ENCODE measurements at regions of chr1 and their contacts with region 1.

Region 1: GRCh38 chr1:181189691-181190363 is 101.3 kb downstream of the IER5 start:
- DNase-seq: peak; percentile 58 to 98
- H3K4me3 ChIP-seq: peak overlapping the region in 3 of 4 experiments; percentile 16 to 63 (median 26); a peak in 4 of 8 replicates
- H3K27ac ChIP-seq: no peak overlapping the region
- H3K4me1 ChIP-seq: peaks cover 0 to 2% (median 0%) of the 10 kb centered on the region in 4 experiments; a peak in 1 of 7 replicates
- H3K27me3 ChIP-seq: peaks cover 0 to 8% (median 4%) of the 10 kb centered on the region in 4 experiments; a peak in 2 of 7 replicates
- CTCF ChIP-seq: peak; percentile 91 to 99 (median 95)
- EP300 ChIP-seq: 0 out of 3 replicates have a peak, but pooled peaks of 1 of the 2 experiments have one; percentile 48
- POLR2A ChIP-seq: no peak
- RAD21 ChIP-seq: peak; percentile 97 to 100

Region 2: GRCh38 chr1:181126938-181127587 is 62.8 kb before region 1 on chr1:
- CTCF ChIA-PET with region 1: no interaction called
- POLR2A ChIA-PET with region 1: no interaction called
- DNase-seq: no peak
- H3K4me3 ChIP-seq: no peak overlapping the region
- H3K27ac ChIP-seq: no peak overlapping the region
- H3K4me1 ChIP-seq: peaks cover 10 to 29% (median 21%) of the 10 kb centered on the region in 4 experiments
- H3K27me3 ChIP-seq: no peaks in the 10 kb centered on the region; a peak in 1 of 7 replicates
- CTCF ChIP-seq: no peak
- EP300 ChIP-seq: no peak
- POLR2A ChIP-seq: no peak
- RAD21 ChIP-seq: no peak

Region 3: DNA sequence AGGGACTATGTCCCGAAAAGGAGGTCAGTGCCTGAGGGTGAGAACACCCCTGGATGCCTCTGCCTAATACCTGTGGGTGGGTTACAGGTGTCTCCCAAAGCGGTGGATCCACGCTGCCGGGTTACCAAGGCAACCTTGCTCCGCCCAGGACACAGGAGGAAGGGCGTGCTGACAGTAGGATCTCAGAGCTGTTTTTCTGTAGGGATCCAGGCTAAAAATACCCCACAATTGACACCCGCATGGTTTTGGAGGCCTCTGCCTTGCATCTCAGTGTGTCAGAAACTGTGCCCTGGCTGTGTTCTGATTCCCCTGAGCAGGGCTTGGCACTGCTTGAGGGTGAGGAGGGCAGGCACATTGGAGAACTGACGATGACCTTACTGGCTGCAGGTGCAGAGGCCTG is 16.7 kb after region 1 on chr1:
- CTCF ChIA-PET with region 1: interaction called, 32 read pairs
- POLR2A ChIA-PET with region 1: no interaction called
- DNase-seq: no peak
- H3K4me3 ChIP-seq: no peak overlapping the region
- H3K27ac ChIP-seq: no peak overlapping the region
- H3K4me1 ChIP-seq: peaks cover 5 to 15% (median 12%) of the 10 kb centered on the region in 4 experiments
- H3K27me3 ChIP-seq: no peaks in the 10 kb centered on the region
- CTCF ChIP-seq: no peak
- EP300 ChIP-seq: no peak
- POLR2A ChIP-seq: no peak
- RAD21 ChIP-seq: no peak

Region 4: GRCh38 chr1:181390410-181391077 is 200.7 kb after region 1 on chr1:
- CTCF ChIA-PET with region 1: interaction called, 69 read pairs
- POLR2A ChIA-PET with region 1: no interaction called
- DNase-seq: no peak
- H3K4me3 ChIP-seq: no peak overlapping the region
- H3K27ac ChIP-seq: no peak overlapping the region
- H3K4me1 ChIP-seq: no peaks in the 10 kb centered on the region
- H3K27me3 ChIP-seq: no peaks in the 10 kb centered on the region
- CTCF ChIP-seq: no peak
- EP300 ChIP-seq: no peak
- POLR2A ChIP-seq: no peak
- RAD21 ChIP-seq: no peak

Region 5: DNA sequence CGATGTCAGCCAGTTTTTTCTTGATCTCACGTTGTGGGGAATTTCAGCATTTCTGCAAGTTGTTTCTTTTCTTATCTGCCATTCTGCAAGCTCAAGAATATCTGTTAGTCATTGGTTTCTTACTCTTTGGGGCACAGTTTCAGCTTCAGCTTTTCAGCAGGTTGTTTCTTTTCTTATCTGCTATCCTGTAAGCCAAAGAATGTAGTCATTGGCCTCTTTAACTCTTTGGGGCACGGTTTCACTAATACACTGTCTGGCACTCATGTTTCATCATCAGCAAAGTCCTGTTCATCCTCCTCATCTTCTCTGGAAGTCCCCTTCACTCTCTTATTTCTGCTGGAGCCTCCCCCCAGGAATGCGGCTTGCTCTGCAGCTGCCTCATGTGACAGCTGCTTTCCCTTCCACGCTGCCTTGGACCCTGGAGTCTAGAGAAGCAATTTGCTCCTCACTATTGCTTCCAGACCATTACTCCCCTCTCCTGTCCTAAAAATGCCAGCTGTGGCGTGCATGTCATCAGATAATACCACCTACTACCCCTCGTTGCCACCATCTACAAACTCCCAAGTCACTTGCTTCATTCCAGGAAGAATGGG is 226.5 kb after region 1 on chr1:
- CTCF ChIA-PET with region 1: interaction called, 64 read pairs
- POLR2A ChIA-PET with region 1: no interaction called
- DNase-seq: no peak
- H3K4me3 ChIP-seq: no peak overlapping the region
- H3K27ac ChIP-seq: no peak overlapping the region
- H3K4me1 ChIP-seq: no peaks in the 10 kb centered on the region
- H3K27me3 ChIP-seq: no peaks in the 10 kb centered on the region
- CTCF ChIP-seq: no peak
- EP300 ChIP-seq: no peak
- POLR2A ChIP-seq: no peak
- RAD21 ChIP-seq: no peak

Region 6: DNA sequence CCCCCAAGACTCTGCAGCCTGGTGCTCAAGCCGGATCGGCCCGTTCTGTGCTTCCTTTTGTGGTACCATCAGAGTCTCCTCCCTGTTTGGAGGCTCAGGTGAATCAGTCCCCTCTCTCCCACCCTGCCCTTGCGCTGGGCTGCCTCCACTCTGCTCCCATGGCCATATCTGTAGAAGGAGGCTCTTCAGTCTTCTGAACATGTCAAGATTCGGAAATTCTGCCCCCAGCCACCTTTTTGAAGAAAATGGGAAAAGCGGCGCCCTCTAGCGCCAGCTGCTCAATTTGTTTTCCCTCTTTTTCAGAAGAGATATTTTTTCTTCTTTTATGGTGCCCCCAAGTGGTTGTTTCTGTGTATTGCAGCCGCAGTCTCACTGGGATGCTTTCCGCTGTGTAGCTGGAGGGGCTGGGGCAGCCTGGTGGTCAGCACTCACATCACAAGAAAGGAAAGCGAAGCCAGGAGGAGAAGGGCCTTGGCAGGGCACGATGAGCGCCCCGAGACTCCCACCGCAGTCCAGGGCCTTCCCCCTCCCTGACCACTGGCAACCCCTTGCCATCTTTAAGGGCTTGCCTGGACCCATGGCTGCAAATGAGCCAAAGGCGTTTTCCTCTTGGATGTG is 235.1 kb after region 1 on chr1:
- CTCF ChIA-PET with region 1: interaction called, 91 read pairs
- POLR2A ChIA-PET with region 1: no interaction called
- DNase-seq: peak; percentile 64 to 94
- H3K4me3 ChIP-seq: no peak overlapping the region
- H3K27ac ChIP-seq: no peak overlapping the region
- H3K4me1 ChIP-seq: no peaks in the 10 kb centered on the region
- H3K27me3 ChIP-seq: peaks cover 0 to 4% (median under 1%) of the 10 kb centered on the region in 4 experiments; a peak in 2 of 7 replicates
- CTCF ChIP-seq: peak; percentile 68 to 100 (median 94)
- EP300 ChIP-seq: no peak
- POLR2A ChIP-seq: no peak
- RAD21 ChIP-seq: peak; percentile 90 to 93

Region 7: DNA sequence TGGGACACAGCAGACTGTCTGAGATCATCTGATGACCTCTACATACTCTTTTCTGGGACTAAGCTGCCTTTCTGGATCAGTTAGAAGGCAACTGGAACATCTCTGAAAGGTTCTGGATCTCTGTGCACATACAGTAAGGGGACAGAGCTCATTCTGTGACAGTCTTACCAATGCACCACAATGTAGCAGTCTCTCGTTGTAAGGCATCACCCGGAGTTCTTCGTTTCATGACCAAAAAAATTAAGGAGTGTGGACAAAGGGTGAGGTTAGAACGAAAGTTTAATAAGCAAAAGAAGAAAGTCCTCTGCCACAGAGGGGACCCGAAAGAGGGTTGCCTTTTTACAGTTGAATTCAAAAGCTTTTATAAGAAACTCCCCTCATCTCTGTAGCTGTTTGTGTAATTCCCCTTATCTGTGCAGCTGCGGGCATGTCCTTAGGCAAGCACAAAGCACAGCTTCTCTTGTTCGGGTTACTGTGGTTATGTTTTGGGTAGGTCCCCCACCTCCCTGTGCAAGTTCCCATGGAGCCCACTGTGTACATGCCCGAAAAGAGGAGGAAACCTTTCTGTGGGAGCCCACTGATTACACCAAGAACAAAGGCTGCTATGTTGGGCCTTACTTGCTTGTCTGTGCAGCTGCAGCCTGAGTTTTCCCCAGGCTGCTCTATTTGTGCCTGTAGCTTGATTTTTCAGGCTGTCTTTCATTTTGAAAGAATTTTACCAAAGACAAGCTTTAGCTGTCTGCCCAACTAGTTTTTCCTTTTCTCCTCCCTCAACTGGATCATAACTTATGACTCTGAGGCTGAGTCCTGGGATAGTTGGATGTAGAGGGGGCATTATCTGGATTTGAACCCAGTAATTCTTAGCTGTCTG is 240.4 kb after region 1 on chr1:
- CTCF ChIA-PET with region 1: interaction called, 91 read pairs
- POLR2A ChIA-PET with region 1: no interaction called
- DNase-seq: no peak
- H3K4me3 ChIP-seq: no peak overlapping the region
- H3K27ac ChIP-seq: no peak overlapping the region
- H3K4me1 ChIP-seq: 0 out of 7 replicates have a peak, but pooled peaks cover 0 to 4% (median 0%) of the 10 kb centered on the region in 4 experiments
- H3K27me3 ChIP-seq: peaks cover 0 to 4% (median 0%) of the 10 kb centered on the region in 4 experiments; a peak in 2 of 7 replicates
- CTCF ChIP-seq: no peak
- EP300 ChIP-seq: no peak
- POLR2A ChIP-seq: no peak
- RAD21 ChIP-seq: no peak

Measured in H1 (cell line).